ENCODE measurements at regions of chr10 and their contacts with region 1.

Region 1: GRCh38 chr10:84328418-84329195 is at the start of gene CCSER2:
- DNase-seq: peak; percentile 99
- ATAC-seq: peak; percentile 97
- total RNA-seq, gene CCSER2: 163 TPM

Region 2: DNA sequence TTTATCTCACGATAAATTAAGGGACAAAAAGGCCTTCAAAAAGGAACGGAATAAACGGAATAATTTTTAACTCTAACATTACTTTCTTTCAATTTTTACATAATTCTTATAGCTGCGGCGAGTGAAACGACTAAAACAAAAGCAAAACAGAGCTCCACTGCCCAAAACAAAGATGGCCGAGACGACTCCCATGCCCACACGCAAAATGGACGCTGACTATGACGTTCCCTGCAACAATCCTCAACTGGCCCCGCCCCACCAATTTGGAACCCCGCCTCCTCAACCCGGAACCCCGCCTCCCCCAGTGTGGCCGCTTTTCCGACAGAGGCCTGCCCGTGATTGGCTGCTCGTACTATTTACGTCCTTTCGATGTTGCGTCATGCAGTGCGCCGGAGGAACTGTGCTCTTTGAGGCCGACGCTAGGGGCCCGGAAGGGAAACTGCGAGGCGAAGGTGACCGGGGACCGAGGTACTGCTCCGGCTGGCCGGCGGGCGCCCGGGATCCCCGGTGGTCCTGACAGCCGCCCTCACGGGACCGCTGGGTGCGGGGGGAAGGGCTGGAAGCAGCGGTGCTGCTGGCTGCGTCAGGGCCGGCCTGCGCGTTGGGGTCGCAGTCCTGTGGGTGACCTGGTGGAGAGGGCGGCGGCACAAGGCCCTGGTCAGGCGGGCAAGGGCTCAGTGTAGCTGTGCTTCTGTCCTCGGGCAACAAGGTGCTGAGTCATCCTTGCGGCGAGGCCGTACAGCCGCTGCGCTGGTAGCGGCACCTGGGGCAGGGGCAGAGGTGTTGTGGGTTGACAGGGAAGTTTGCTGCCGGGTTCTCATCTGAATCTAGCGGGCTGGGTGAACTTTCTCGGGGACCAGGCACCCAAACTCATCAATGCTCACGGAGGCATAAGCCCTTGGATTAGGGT is 189.2 kb before region 1 on chr10 and contains the start of gene GHITM:
- intact Hi-C with region 1: loop called (anchors 10 kb)
- DNase-seq: peak; percentile 99
- ATAC-seq: peak; percentile 100
- total RNA-seq, gene GHITM: 383 TPM